T-cell (primary cell): ENCODE measurements at regions of chr7 and their contacts with region 1.

Region 1: GRCh38 chr7:16891338-16891737 is 9.6 kb upstream of the AGR3 start:
- DNase-seq: peak in 9 of 35 experiments; percentile 0 to 50 (median 5)
- ATAC-seq: peak in 3 of 4 experiments; percentile 40 to 85 (median 59)
- H3K4me3 ChIP-seq: no peak overlapping the region
- H3K4me3 Mint-ChIP-seq: no peak overlapping the region
- H3K27ac ChIP-seq: no peak overlapping the region
- H3K27ac Mint-ChIP-seq: no peak overlapping the region
- H3K4me1 ChIP-seq: no peaks in the 10 kb centered on the region
- H3K4me1 Mint-ChIP-seq: peaks cover 0 to 8% (median 7%) of the 10 kb centered on the region in 3 donors
- H3K27me3 ChIP-seq: no peaks in the 10 kb centered on the region
- H3K27me3 Mint-ChIP-seq: peaks cover 0 to 4% of the 10 kb centered on the region in 2 donors

Region 2: GRCh38 chr7:16753102-16753931 is 138.0 kb before region 1 on chr7 and contains the start of gene TSPAN13:
- CTCF ChIA-PET with region 1: no interaction called
- POLR2A ChIA-PET with region 1: no interaction called
- DNase-seq: peak in 29 of 35 experiments; percentile 4 to 56 (median 16)
- ATAC-seq: peak; percentile 73 to 93 (median 80)
- H3K4me3 ChIP-seq: peak within 1 kb of the TSS; percentile 41 to 90
- H3K4me3 Mint-ChIP-seq: peak within 1 kb of the TSS; percentile 69 to 86 (median 77)
- H3K27ac ChIP-seq: no peak within 1 kb of the TSS
- H3K27ac Mint-ChIP-seq: peak within 1 kb of the TSS in 1 of 2 donors; percentile 51
- H3K4me1 ChIP-seq: peaks cover 3 to 12% of the 10 kb centered on the region in 2 experiments
- H3K4me1 Mint-ChIP-seq: peaks cover 10 to 14% (median 10%) of the 10 kb centered on the region in 3 donors
- H3K27me3 ChIP-seq: peaks cover 2 to 22% of the 10 kb centered on the region in 2 experiments
- H3K27me3 Mint-ChIP-seq: peaks cover 23 to 28% of the 10 kb centered on the region in 2 donors
- total RNA-seq, gene TSPAN13: 0.73 to 2.0 (median 0.98) TPM

Region 3: DNA sequence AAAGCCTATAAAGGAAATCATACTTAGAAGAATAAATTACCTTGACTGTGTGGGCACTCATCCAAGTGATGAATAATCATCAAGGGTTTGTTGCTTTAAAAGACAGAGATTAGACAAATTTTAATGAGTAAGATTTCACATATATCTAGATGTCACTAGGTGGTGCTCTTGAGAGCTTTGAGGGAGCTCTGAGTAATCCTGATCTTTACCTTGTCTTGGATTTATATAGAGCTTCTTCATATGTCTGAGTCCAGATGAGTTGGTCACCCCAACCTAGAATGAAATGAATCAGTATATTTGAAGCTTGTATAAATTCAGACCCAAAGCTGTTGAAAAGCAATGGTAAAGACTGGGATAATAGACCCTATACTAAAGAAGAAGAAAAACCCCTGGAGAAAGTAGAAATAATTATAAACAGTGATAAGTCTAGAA is 90.2 kb before region 1 on chr7:
- CTCF ChIA-PET with region 1: no interaction called
- POLR2A ChIA-PET with region 1: no interaction called
- DNase-seq: peak in 1 of 35 experiments; percentile 13
- ATAC-seq: no peak
- H3K4me3 ChIP-seq: no peak overlapping the region
- H3K4me3 Mint-ChIP-seq: no peak overlapping the region
- H3K27ac ChIP-seq: no peak overlapping the region
- H3K27ac Mint-ChIP-seq: no peak overlapping the region
- H3K4me1 ChIP-seq: no peaks in the 10 kb centered on the region
- H3K4me1 Mint-ChIP-seq: no peaks in the 10 kb centered on the region
- H3K27me3 ChIP-seq: peaks cover 0 to 3% of the 10 kb centered on the region in 2 experiments
- H3K27me3 Mint-ChIP-seq: peaks cover 4 to 8% of the 10 kb centered on the region in 2 donors

Region 4: DNA sequence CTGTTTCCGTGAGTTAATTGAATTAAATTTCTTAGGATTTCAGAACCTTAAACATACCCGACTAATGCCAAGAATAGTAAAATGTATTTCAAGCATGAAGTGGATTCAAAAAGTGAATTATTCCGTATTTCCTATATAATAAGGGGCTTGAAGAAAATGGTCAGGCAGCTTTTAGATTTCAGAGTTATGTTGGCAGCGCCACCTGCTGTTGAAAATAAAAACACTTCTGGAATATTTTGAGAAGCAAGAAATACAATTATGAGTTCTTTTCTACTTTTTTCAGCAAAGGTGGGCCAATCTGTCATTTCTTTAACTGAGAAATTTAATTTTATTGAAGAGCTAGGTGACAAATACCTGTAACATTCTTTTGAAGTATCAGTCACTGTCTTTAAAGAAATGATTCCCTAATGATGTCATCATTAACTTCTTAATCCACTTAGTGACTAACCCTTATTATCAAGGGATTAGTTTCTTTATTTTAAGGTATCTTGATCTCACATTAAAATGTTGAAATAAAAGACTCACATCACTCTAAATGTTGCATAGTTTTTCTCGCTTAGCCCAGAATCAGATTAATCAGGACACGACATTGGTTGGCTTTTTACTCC is 27.1 kb after region 1 on chr7:
- CTCF ChIA-PET with region 1: interaction called, 9 to 29 read pairs
- POLR2A ChIA-PET with region 1: no interaction called
- DNase-seq: peak in 3 of 35 experiments; percentile 2 to 50 (median 4)
- ATAC-seq: no peak
- H3K4me3 ChIP-seq: no peak overlapping the region
- H3K4me3 Mint-ChIP-seq: no peak overlapping the region
- H3K27ac ChIP-seq: no peak overlapping the region
- H3K27ac Mint-ChIP-seq: no peak overlapping the region
- H3K4me1 ChIP-seq: peaks cover 0 to 15% of the 10 kb centered on the region in 2 experiments
- H3K4me1 Mint-ChIP-seq: peaks cover 7 to 8% (median 7%) of the 10 kb centered on the region in 3 donors
- H3K27me3 ChIP-seq: no peaks in the 10 kb centered on the region
- H3K27me3 Mint-ChIP-seq: no peaks in the 10 kb centered on the region

Region 5: DNA sequence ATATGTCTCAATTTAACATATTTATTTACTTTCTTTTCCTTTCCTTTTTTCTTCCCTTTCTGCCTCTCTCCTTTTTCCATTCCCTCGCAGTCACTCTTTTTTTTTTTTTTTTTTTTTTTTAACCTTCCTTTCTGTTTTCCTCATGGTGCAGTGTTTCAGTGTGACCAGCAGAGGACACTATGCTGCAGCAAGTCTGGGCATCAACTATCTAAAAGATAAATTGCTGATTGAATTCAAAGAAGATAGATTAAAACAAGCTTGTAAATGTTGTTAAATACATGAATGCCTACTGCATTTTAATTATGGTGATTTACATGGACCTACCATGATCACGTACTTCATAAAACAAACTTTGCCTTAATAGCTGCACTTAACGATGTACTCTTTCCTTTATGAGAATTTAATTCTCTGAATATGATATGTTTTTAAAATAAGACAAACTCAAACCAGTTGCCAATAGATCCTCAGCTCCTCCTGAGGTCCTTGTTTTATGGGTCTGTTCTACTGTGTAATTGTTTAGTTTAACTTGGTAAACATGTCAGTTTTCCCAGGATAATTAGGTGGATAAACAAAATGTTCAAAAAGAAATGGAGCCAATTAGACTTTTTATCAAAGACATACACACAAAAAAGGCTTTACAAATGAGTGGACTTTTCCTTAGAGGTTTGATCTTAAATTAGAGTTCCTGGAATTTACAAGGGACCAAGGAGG is 91.5 kb after region 1 on chr7:
- CTCF ChIA-PET with region 1: no interaction called
- POLR2A ChIA-PET with region 1: no interaction called
- DNase-seq: peak in 18 of 35 experiments; percentile 1 to 61 (median 4)
- ATAC-seq: peak in 2 of 4 experiments; percentile 49 to 51
- H3K4me3 ChIP-seq: no peak overlapping the region
- H3K4me3 Mint-ChIP-seq: no peak overlapping the region
- H3K27ac ChIP-seq: no peak overlapping the region
- H3K27ac Mint-ChIP-seq: peak overlapping the region in 1 of 2 donors; percentile 65
- H3K4me1 ChIP-seq: no peaks in the 10 kb centered on the region
- H3K4me1 Mint-ChIP-seq: peaks cover 3 to 7% (median 6%) of the 10 kb centered on the region in 3 donors
- H3K27me3 ChIP-seq: peaks cover 0 to 3% of the 10 kb centered on the region in 2 experiments
- H3K27me3 Mint-ChIP-seq: peaks cover 4 to 6% of the 10 kb centered on the region in 2 donors